H1 (cell line): ENCODE measurements at regions of chr20 and their contacts with region 1.

Region 1: GRCh38 chr20:35303735-35304491 is 11.7 kb upstream of the FAM83C start:
- DNase-seq: peak; percentile 92 to 93
- H3K4me3 ChIP-seq: peak overlapping the region in 2 of 4 experiments; percentile 20 to 30; a peak in 3 of 8 replicates
- H3K27ac ChIP-seq: no peak overlapping the region
- H3K4me1 ChIP-seq: peaks cover 0 to 4% (median 2%) of the 10 kb centered on the region in 4 experiments; a peak in 2 of 7 replicates
- H3K27me3 ChIP-seq: no peaks in the 10 kb centered on the region
- CTCF ChIP-seq: peak; percentile 93 to 99 (median 96)
- EP300 ChIP-seq: peak in 1 of 2 experiments; percentile 20; a peak in 1 of 3 replicates
- POLR2A ChIP-seq: no peak
- RAD21 ChIP-seq: peak; percentile 89 to 92

Region 2: DNA sequence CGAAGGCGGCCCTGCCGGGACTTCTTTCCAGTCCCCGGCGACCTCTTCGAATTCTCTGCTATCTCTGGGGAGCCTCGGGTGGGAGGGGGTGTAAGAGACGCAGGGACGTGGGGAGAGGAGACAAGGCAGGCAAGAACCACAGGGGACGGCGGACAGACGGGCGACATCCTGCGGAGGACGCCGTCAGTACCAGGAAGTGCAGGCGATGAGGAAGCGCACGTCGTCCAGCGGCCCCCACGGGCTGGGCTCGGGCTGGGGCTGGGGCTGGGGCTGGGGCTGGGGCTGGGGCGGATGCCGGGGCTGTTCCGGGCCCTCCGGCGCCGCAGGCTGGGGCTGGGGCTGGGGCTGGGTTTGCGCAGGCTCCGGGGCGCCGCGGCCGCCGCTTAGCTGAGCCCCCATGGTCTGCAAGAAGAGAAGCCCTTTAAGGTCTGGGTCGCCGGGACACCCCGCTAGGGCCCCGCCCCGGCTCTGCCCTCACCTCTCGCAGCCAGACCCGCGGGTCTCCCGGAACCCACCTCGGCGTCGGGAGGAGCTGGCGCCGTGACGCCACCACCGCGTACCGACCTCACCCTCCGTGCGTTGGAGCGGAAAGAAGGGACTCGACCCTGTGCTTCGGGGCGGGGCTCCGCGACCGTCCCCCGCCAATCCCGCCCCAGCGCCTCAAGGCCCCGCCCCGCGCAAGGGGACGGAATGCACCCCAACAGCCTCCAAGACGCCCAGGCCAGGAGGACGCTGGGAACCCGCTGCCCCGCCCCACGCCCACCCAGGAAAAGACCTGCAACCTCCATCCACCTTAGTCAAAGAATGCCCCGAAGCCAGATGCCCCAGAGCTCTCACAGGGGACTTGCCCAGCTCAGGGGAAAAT is 26.1 kb before region 1 on chr20 and contains the start of gene MMP24OS:
- CTCF ChIA-PET with region 1: interaction called, 104 read pairs
- POLR2A ChIA-PET with region 1: interaction called, 8 read pairs
- DNase-seq: peak; percentile 86 to 91
- H3K4me3 ChIP-seq: peak within 1 kb of the TSS; percentile 40 to 73 (median 66)
- H3K27ac ChIP-seq: 0 out of 2 replicates have a peak within 1 kb of the TSS, but pooled peaks have one; percentile 22
- H3K4me1 ChIP-seq: peaks cover 5 to 9% (median 7%) of the 10 kb centered on the region in 4 experiments; a peak in 6 of 7 replicates
- H3K27me3 ChIP-seq: no peaks in the 10 kb centered on the region
- CTCF ChIP-seq: peak in 2 of 3 experiments; percentile 11 to 47; a peak in 2 of 4 replicates
- EP300 ChIP-seq: no peak
- POLR2A ChIP-seq: peak; percentile 79 to 91
- RAD21 ChIP-seq: peak in 1 of 2 experiments; percentile 5; a peak in 1 of 4 replicates
- total RNA-seq, gene MMP24OS: 19.0 and 22.2 TPM in 2 replicates

Region 3: GRCh38 chr20:35329435-35330139 is 25.7 kb after region 1 on chr20:
- CTCF ChIA-PET with region 1: interaction called, 141 read pairs
- POLR2A ChIA-PET with region 1: interaction called, 4 read pairs
- DNase-seq: peak in 1 of 2 experiments; percentile 89
- H3K4me3 ChIP-seq: no peak overlapping the region
- H3K27ac ChIP-seq: no peak overlapping the region
- H3K4me1 ChIP-seq: peaks cover 0 to 4% (median 1%) of the 10 kb centered on the region in 4 experiments; a peak in 2 of 7 replicates
- H3K27me3 ChIP-seq: no peaks in the 10 kb centered on the region
- CTCF ChIP-seq: peak; percentile 80 to 93 (median 91)
- EP300 ChIP-seq: no peak
- POLR2A ChIP-seq: no peak
- RAD21 ChIP-seq: peak; percentile 47 to 72

Region 4: GRCh38 chr20:35410613-35411012 is 106.7 kb after region 1 on chr20:
- CTCF ChIA-PET with region 1: no interaction called
- POLR2A ChIA-PET with region 1: no interaction called
- DNase-seq: no peak
- H3K4me3 ChIP-seq: peak overlapping the region; percentile 89 to 90 (median 90); a peak in 6 of 8 replicates
- H3K27ac ChIP-seq: no peak overlapping the region
- H3K4me1 ChIP-seq: peaks cover 0 to 5% (median 0%) of the 10 kb centered on the region in 4 experiments; a peak in 2 of 7 replicates
- H3K27me3 ChIP-seq: no peaks in the 10 kb centered on the region
- CTCF ChIP-seq: no peak
- EP300 ChIP-seq: no peak
- POLR2A ChIP-seq: no peak
- RAD21 ChIP-seq: no peak

Region 5: DNA sequence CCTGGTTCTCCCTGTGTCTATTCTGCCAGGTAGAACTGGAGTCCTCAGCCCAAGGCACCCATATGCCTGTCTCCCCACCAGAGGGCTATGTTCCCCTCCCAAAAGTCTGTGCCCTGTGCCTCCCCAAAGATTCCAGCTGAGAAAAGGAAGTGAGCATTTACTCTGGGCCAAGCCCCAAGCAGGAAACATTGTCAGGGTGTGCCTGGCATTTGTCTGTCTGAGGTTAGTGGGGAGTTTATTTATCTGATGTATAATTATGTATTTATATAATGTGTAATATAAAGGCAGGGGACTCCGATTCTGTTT is 128.5 kb after region 1 on chr20:
- CTCF ChIA-PET with region 1: interaction called, 11 read pairs
- POLR2A ChIA-PET with region 1: no interaction called
- DNase-seq: no peak
- H3K4me3 ChIP-seq: no peak overlapping the region
- H3K27ac ChIP-seq: no peak overlapping the region
- H3K4me1 ChIP-seq: peaks cover 5 to 22% (median 12%) of the 10 kb centered on the region in 4 experiments
- H3K27me3 ChIP-seq: no peaks in the 10 kb centered on the region
- CTCF ChIP-seq: peak; percentile 17 to 27 (median 22); a peak in 3 of 4 replicates
- EP300 ChIP-seq: no peak
- POLR2A ChIP-seq: no peak
- RAD21 ChIP-seq: peak in 1 of 2 experiments; percentile 27; a peak in 1 of 4 replicates

Region 6: DNA sequence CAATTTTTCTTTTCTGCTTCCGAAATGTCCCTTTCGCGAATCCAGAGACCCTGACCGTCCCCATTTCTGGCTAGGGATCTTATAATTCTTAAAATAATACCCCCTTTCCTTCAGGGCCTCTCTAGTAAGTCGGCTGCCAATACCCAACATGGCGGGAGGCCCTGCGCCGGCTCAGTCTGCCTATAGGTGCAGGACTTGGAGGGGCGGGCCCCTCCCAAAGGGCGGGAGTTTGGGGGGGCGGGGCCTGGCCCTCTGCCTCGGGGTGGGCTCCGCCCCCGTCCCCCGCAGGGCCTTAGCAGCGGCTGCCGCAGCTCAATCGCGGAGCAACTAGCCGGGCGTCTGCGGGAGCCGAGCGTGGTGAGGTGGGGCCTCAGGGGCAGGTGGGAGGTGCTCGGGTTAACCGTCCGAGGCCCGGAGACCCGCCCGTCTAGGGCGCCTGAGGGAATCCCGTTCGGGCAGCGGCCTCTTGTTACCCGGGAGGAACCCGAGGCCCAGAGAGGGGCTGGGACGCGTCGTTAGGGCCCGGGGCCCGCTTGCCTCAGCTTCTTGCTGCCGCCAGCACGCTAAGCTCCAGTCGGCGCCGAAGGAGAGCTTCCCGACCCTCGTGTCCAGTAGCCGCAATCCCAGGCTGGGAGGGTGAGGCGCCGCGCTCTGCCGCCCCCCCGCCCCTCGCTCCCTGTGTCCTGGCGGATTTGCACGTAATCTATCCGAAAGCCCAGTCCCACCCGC is 151.1 kb after region 1 on chr20 and contains the start of gene CEP250:
- CTCF ChIA-PET with region 1: interaction called, 4 read pairs
- POLR2A ChIA-PET with region 1: interaction called, 11 read pairs
- DNase-seq: peak; percentile 96
- H3K4me3 ChIP-seq: peak within 1 kb of the TSS; percentile 79 to 98 (median 90)
- H3K27ac ChIP-seq: peak within 1 kb of the TSS; percentile 98
- H3K4me1 ChIP-seq: peaks cover 2 to 6% (median 5%) of the 10 kb centered on the region in 4 experiments; a peak in 2 of 7 replicates
- H3K27me3 ChIP-seq: no peaks in the 10 kb centered on the region
- CTCF ChIP-seq: no peak
- EP300 ChIP-seq: no peak
- POLR2A ChIP-seq: peak; percentile 65 to 87
- RAD21 ChIP-seq: no peak
- total RNA-seq, gene CEP250: 33.1 and 33.7 TPM in 2 replicates

Region 7: GRCh38 chr20:35490736-35491181 is 186.8 kb after region 1 on chr20:
- CTCF ChIA-PET with region 1: no interaction called
- POLR2A ChIA-PET with region 1: no interaction called
- DNase-seq: no peak
- H3K4me3 ChIP-seq: no peak overlapping the region
- H3K27ac ChIP-seq: no peak overlapping the region
- H3K4me1 ChIP-seq: no peaks in the 10 kb centered on the region
- H3K27me3 ChIP-seq: no peaks in the 10 kb centered on the region
- CTCF ChIP-seq: no peak
- EP300 ChIP-seq: no peak
- POLR2A ChIP-seq: no peak
- RAD21 ChIP-seq: no peak